Activated CD8-positive, alpha-beta memory T cell treated with anti-CD3 and anti-CD28 coated beads, Interleukin-2, amount 10 ng/mL, durations not matched to agents 7 days and 5 days (primary cell): ENCODE measurements at regions of chr5 and their contacts with region 1.

Region 1: GRCh38 chr5:138503487-138504270 is 38.4 kb downstream of the EGR1 start:
- DNase-seq: peak; percentile 48
- ATAC-seq: peak; percentile 69
- H3K4me3 Mint-ChIP-seq: no peak overlapping the region
- H3K27ac Mint-ChIP-seq: no peak overlapping the region
- H3K4me1 Mint-ChIP-seq: no peaks in the 10 kb centered on the region
- H3K27me3 Mint-ChIP-seq: no peaks in the 10 kb centered on the region

Region 2: DNA sequence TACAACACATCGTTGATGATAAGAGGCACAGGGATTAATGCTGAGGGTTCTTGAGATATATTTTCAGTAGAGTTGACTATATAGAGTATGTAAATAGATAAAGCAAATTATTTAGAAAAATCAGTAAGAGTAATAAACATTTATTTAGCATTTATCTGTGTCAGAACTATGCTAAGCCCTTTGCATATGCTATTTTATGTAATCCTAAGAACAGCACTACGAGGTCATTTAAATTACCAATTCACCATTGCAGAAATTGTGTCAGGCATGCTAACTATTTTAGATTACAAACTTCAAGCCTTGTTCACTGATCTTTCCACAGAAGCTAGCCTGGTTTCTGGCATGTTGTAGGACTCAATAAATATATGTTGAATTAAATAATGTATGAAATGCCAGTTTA is 85.2 kb before region 1 on chr5:
- CTCF ChIA-PET with region 1: no interaction called
- DNase-seq: no peak
- ATAC-seq: no peak
- H3K4me3 Mint-ChIP-seq: no peak overlapping the region
- H3K27ac Mint-ChIP-seq: no peak overlapping the region
- H3K4me1 Mint-ChIP-seq: peaks cover 9% of the 10 kb centered on the region
- H3K27me3 Mint-ChIP-seq: no peaks in the 10 kb centered on the region

Region 3: GRCh38 chr5:138449501-138450239 is 54.0 kb before region 1 on chr5:
- CTCF ChIA-PET with region 1: interaction called, 91 read pairs
- DNase-seq: peak; percentile 84
- ATAC-seq: peak; percentile 95
- H3K4me3 Mint-ChIP-seq: no peak overlapping the region
- H3K27ac Mint-ChIP-seq: no peak overlapping the region
- H3K4me1 Mint-ChIP-seq: peaks cover 4% of the 10 kb centered on the region
- H3K27me3 Mint-ChIP-seq: peaks cover 2% of the 10 kb centered on the region

Region 4: DNA sequence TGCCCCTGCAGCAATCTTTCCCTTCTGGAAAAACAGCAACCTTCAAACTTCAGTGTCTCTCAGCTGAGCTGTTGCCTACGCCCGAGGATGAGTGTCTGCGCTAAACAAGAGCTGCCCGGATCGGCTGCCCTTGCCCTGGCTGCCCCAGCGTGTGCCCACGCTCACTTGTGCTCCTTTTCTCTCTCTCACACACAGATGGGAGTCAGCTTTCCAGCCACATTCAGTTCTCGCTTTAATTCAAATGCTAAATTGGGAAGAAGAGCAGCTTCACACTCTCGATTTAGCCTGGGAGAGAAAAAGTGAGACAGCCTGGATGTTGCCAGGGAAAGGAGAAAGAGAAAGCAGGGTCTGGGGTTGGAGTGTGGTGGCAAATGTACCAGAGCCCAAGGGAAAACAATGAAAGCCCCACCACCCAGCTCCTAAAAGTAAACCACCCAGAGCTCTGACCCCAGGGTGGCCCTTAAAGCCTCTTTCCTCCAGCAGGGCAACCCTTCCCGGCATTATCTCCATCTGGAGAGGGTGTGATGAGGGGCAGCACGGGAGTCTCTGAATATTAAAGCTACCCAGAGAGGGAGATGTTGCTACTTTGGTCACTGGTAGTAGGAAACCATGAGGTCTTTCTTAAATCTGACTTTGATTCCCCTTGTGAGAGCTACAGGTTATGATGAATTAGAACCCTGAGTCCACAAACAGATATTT is 48.3 kb before region 1 on chr5:
- CTCF ChIA-PET with region 1: interaction called, 91 read pairs
- DNase-seq: no peak
- ATAC-seq: no peak
- H3K4me3 Mint-ChIP-seq: no peak overlapping the region
- H3K27ac Mint-ChIP-seq: no peak overlapping the region
- H3K4me1 Mint-ChIP-seq: peaks cover 27% of the 10 kb centered on the region
- H3K27me3 Mint-ChIP-seq: no peaks in the 10 kb centered on the region

Region 5: DNA sequence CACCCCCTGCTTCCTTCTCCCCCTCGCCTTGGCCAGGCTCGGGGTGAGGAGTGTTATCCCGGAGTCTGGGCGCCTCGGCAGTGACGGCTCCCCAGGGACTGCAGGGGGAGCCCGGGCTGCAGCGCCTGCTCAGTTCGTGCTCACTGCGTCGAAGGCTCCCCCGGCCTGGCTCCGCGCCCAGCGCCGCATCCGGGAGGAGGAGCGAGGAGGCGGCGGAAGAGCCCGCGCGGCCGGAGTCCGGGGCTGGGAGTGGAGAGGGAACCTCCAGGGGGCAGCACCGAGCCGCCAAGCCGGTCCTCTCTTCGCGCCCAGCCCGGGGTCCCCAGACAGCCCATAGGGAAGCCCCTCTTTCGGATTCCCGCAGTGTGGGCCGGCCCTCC is 39.7 kb before region 1 on chr5:
- CTCF ChIA-PET with region 1: interaction called, 54 read pairs
- DNase-seq: peak; percentile 94
- ATAC-seq: peak; percentile 48
- H3K4me3 Mint-ChIP-seq: peak overlapping the region; percentile 83
- H3K27ac Mint-ChIP-seq: peak overlapping the region; percentile 94
- H3K4me1 Mint-ChIP-seq: peaks cover 29% of the 10 kb centered on the region
- H3K27me3 Mint-ChIP-seq: peaks cover 15% of the 10 kb centered on the region

Region 6: DNA sequence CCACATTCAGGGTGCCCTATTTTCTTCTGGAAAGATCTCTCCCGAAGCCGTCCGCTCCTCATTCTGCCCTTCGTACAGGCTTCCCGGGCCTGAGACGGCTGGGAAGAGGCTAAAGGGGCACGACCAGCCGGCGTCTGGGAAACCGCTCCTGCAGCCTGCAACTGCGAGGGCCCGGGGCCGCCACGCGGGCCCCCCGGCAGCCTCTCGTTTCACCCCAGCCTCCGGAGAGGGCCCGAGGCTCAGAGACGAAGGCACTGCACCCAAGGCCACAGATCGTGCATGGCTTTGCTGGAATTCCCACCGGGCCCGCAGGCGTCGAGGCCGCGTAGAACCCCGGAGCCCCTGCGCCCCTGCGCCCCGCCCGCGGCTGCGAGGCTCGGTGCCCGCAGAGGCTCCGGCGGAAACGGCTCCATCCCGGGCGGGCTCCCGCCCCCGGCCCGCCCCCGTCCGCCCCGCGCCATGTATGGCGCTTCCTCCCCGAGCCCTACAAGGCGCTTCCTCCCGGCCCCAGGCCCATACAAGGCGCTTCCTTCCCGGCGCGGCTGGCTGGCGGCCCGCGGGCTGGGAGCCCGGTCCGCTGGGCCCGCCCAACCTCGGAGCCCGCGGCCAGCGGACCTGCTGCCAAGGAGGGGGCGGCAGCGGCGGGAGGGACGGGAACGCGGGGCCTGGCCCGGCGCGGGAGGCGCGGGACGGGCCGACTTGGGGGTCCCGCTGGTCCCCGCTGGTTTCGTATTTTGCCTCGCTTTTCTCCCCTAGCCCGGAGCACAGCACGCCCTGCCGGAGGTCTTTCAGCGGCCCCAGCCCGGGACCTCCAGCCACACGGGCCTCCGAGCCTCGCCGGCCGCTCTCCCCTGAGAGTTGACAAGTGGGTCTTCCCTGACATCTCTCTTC is 11.8 kb before region 1 on chr5:
- CTCF ChIA-PET with region 1: interaction called, 14 read pairs
- DNase-seq: peak; percentile 90
- ATAC-seq: peak; percentile 100
- H3K4me3 Mint-ChIP-seq: peak overlapping the region; percentile 79
- H3K27ac Mint-ChIP-seq: peak overlapping the region; percentile 56
- H3K4me1 Mint-ChIP-seq: peaks cover 4% of the 10 kb centered on the region
- H3K27me3 Mint-ChIP-seq: peaks cover 56% of the 10 kb centered on the region

Region 7: DNA sequence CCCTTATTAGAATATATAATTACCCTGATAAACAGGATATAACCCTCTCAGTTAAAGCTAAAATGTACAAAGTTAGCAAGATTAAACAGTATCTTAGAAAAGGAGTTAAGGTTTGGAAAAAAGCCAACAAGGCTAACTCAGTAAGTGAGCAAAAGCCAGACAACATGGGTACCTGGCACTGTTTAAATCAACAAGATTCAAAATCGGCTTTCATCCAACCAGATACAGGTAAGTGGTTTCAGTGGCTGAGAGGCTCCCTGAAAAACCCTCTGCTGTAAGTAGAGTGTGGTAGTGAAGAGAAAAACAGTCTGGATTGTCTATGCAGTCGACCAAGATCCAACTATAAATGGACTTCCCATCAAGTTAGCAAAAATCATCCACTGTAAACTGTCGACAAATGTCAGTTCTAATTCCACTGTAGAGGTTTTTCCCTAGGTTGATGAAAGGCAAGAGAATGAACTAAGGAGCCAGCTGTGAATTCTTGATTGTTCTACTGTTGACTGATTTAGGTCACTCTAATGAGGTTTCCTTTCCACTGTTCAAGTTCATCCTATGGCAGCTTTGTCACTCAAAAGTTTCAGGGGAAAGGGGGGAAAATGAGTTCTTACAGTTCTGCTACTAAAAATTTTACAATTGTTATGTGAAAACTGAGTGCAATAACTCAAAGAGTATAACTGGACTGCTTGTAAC is 12.0 kb after region 1 on chr5:
- CTCF ChIA-PET with region 1: interaction called, 11 read pairs
- DNase-seq: no peak
- ATAC-seq: no peak
- H3K4me3 Mint-ChIP-seq: no peak overlapping the region
- H3K27ac Mint-ChIP-seq: no peak overlapping the region
- H3K4me1 Mint-ChIP-seq: peaks cover 3% of the 10 kb centered on the region
- H3K27me3 Mint-ChIP-seq: no peaks in the 10 kb centered on the region